Motor neuron (in vitro differentiated cells): ENCODE measurements at regions of chr2 and their contacts with region 1.

Region 1: DNA sequence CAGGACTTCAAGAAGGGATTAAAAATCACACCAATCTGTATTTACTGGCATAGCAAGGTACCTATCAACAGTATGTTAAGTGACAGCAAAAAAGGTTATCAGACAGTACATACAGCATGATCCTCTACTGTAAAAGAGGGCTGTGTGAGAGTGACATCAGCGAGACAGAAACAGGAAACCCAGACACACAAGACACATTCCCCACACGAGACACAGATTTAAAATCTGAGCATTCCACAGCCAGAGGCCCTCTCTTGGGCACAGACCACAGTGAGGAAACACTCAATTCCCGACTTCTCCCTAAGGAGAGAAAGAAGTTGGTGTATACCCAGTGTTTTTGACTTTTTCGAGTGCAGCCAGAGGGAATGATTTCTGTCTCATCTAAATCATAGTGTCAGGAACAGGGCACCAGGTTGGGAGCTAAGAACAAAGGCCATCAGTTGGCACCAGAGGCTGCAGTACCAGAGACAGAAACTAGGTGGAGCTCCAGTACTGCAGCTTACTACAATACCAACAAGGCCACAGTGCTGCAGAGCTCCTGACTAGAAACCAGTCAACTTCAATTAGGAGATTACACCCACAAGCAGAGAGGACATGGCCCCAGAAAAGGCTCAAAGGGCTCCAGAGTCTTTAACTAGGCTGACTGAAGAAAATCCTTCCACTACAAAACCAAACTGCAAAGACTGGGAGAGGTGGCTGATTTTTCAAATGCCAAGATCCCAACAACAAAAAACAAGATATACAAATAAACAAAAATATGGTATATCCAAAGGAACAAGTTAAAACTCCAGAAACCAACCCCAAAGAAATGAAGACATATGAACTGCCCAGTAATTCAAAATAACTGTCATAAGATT is 41.0 kb downstream of the UNC50 start:
- ATAC-seq: peak; percentile 80 to 98 (median 92)
- H3K4me3 ChIP-seq: no peak overlapping the region
- H3K27ac ChIP-seq: no peak overlapping the region
- H3K4me1 ChIP-seq: peaks cover 0 to 3% of the 10 kb centered on the region in 2 donors

Region 2: DNA sequence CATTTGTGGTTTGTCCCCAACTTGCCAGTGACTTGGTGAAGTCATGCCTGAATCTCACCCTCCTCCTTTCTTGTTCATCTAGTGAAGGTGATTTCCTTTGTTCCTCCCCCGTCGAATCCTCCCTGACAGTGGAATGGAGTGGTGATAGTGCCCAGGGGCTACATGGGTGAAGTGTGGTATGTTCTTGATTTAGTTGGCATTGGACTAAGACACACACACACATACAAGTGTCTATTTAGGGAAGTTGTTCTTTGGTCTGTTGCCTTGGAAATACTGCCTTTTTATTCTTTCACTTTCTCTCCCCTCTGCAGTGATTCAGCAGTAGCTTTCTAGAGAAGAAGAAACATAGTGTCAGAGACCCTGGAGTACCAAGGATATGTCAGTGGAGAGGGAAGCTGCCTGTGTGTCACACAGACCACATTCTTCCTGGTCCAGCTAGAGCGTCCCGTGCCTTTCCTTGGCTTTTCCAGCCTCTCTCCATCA is 193.8 kb before region 1 on chr2:
- in situ Hi-C with region 1: no loop called
- ATAC-seq: peak in 1 of 8 experiments; percentile 42
- H3K4me3 ChIP-seq: no peak overlapping the region
- H3K27ac ChIP-seq: no peak overlapping the region
- H3K4me1 ChIP-seq: peaks cover under 1 to 22% of the 10 kb centered on the region in 2 donors

Region 3: GRCh38 chr2:98508709-98509066 is 140.7 kb before region 1 on chr2:
- in situ Hi-C with region 1: no loop called
- ATAC-seq: peak in 5 of 8 experiments; percentile 67 to 77 (median 70)
- H3K4me3 ChIP-seq: no peak overlapping the region
- H3K27ac ChIP-seq: peak overlapping the region in 1 of 2 donors; percentile 56
- H3K4me1 ChIP-seq: peaks cover 30 to 47% of the 10 kb centered on the region in 2 donors

Region 4: GRCh38 chr2:99066075-99066958 is 417.0 kb after region 1 on chr2:
- in situ Hi-C with region 1: loop called in 5 of 9 experiments (anchors 10 to 25 kb)
- ATAC-seq: peak in 6 of 8 experiments; percentile 26 to 94 (median 85)
- H3K4me3 ChIP-seq: no peak overlapping the region
- H3K27ac ChIP-seq: no peak overlapping the region
- H3K4me1 ChIP-seq: no peaks in the 10 kb centered on the region